Endothelial cell of umbilical vein (primary cell): ENCODE measurements at regions of chr1 and their contacts with region 1.

Region 1: DNA sequence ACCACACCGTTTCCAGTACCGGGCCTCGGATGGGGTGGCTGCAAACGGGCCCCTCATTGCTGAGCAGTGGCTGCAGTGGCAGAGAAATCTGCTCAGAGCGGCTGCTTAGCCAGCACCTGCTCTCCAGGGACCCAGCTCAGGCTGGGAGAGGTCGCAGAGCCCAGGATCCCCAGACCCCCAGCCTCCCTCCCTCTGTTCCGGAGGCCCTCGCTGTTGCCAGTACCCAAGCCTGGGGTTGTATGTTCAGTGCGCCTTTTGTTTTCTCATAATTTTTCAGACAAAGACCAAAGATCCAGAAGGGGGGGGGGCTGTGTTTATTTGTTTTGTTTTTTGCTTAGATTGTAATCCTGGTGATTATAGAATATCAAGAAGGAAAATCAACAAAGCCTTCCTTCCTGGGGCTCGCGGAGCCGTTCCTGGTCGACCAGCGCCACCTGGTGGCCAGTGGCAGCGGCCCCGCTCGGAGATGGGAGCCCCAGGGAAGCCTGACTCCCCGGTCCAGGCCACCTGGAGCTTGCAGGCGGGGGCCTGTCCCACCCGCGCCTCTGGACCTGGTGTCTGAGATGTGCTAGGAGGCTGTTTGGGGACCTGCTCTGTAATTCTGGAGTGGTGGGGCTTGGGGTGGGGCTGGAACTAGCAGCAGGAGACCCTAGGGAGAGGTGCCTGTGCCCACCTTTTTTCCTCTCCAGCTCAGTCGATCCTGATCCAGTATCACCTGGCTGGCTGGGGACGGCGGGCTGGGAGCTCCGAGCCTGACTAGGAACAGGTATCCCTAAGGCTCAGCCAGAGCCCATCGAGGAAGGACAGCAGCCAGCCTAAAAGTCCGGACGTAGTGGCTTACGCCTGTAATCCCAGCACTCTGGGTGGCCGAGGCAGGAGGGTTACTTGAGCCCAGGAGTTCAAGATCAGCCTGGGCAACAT is 123.9 kb upstream of the VAMP3 start:
- DNase-seq: peak; percentile 36
- H3K4me3 ChIP-seq: no peak overlapping the region
- H3K27ac ChIP-seq: no peak overlapping the region
- H3K4me1 ChIP-seq: peaks cover 3% of the 10 kb centered on the region
- H3K27me3 ChIP-seq: no peaks in the 10 kb centered on the region
- CTCF ChIP-seq: peak; percentile 90 to 91
- POLR2A ChIP-seq: no peak

Region 2: GRCh38 chr1:6889875-6890480 is 757.3 kb before region 1 on chr1:
- CTCF ChIA-PET with region 1: no interaction called
- POLR2A ChIA-PET with region 1: no interaction called
- dilution Hi-C with region 1: no loop called
- intact Hi-C with region 1: loop called (anchors 2 kb)
- DNase-seq: peak; percentile 82
- H3K4me3 ChIP-seq: no peak overlapping the region
- H3K27ac ChIP-seq: no peak overlapping the region
- H3K4me1 ChIP-seq: no peaks in the 10 kb centered on the region
- H3K27me3 ChIP-seq: no peaks in the 10 kb centered on the region
- CTCF ChIP-seq: peak; percentile 76 to 88
- POLR2A ChIP-seq: no peak

Region 3: GRCh38 chr1:7070389-7071029 is 576.7 kb before region 1 on chr1:
- CTCF ChIA-PET with region 1: interaction called, 26 read pairs
- POLR2A ChIA-PET with region 1: no interaction called
- dilution Hi-C with region 1: no loop called
- intact Hi-C with region 1: loop called (anchors 1 kb)
- DNase-seq: peak; percentile 69
- H3K4me3 ChIP-seq: peak overlapping the region in 2 of 3 experiments; percentile 16 to 20
- H3K27ac ChIP-seq: no peak overlapping the region
- H3K4me1 ChIP-seq: peaks cover 4% of the 10 kb centered on the region
- H3K27me3 ChIP-seq: no peaks in the 10 kb centered on the region
- CTCF ChIP-seq: peak; percentile 73 to 95
- POLR2A ChIP-seq: no peak

Region 4: DNA sequence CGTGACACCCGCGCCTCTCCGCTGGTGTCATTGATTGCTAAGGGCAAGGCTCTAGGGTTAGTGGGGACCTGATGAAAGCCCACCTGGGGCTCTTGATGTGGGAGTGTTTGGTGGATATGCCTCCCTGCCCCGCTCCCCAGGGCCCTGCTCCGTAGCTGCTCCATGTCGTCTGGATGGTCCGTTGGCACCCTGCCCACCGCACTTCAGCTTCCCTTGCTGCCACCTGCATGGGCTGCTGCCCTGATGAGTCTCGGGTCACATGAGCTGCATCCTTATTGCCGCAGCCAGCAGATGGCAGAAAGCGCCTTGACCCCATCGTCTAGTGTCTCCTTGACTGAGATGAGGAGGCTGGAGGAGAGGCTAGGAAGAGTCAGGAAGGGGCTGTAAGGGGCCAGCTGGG is 422.6 kb before region 1 on chr1:
- CTCF ChIA-PET with region 1: interaction called, 9 read pairs
- POLR2A ChIA-PET with region 1: no interaction called
- dilution Hi-C with region 1: no loop called
- intact Hi-C with region 1: loop called (anchors 1 kb)
- DNase-seq: no peak
- H3K4me3 ChIP-seq: no peak overlapping the region
- H3K27ac ChIP-seq: no peak overlapping the region
- H3K4me1 ChIP-seq: no peaks in the 10 kb centered on the region
- H3K27me3 ChIP-seq: no peaks in the 10 kb centered on the region
- CTCF ChIP-seq: no peak
- POLR2A ChIP-seq: no peak

Region 5: DNA sequence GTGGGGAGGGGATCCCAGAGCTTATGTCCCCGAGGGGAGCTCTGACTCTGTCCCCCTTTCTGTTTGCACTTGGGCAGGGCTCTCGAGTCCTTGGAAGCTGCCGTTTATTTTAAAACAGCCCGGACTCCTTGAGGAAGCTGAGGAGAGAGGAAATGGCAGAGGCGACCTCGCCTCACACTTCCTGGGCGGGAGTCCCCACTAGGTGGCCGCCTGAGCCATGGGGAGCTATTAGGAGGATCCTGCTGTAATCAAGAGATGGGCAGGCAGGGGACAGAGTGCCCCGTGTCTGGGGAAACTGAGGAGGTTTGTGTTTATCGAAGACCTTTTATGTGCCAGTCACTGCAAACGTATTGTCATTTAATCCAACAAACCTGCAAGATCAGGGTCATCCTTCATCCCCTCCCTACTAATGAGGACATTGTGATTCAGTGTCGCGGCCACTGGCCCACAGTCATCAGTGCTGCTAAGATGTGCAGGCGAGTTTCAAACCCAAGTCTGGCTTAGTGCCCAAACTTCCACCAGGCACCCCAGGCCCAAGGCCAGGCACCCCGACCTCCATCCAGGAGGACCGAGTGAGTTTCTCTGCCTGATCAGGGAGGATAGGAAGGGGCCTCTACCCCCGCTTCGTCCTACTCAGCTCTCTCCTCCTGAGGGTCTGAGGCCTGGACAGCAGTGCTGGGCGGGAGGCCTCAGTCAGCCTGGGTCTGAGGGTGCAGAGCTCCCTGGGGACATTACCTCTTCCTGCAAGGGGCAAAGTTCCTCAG is 193.0 kb before region 1 on chr1:
- CTCF ChIA-PET with region 1: interaction called, 4 read pairs
- POLR2A ChIA-PET with region 1: no interaction called
- dilution Hi-C with region 1: no loop called
- intact Hi-C with region 1: loop called (anchors 2 kb)
- DNase-seq: no peak
- H3K4me3 ChIP-seq: no peak overlapping the region
- H3K27ac ChIP-seq: no peak overlapping the region
- H3K4me1 ChIP-seq: no peaks in the 10 kb centered on the region
- H3K27me3 ChIP-seq: no peaks in the 10 kb centered on the region
- CTCF ChIP-seq: no peak
- POLR2A ChIP-seq: no peak

Region 6: GRCh38 chr1:7549277-7550161 is 97.7 kb before region 1 on chr1:
- CTCF ChIA-PET with region 1: interaction called, 6 read pairs
- POLR2A ChIA-PET with region 1: interaction called, 4 read pairs
- dilution Hi-C with region 1: no loop called
- intact Hi-C with region 1: loop called (anchors 5 kb)
- DNase-seq: peak; percentile 84
- H3K4me3 ChIP-seq: peak overlapping the region in 1 of 3 experiments; percentile 13
- H3K27ac ChIP-seq: peak overlapping the region; percentile 94
- H3K4me1 ChIP-seq: peaks cover 28% of the 10 kb centered on the region
- H3K27me3 ChIP-seq: no peaks in the 10 kb centered on the region
- CTCF ChIP-seq: no peak
- POLR2A ChIP-seq: no peak

Region 7: DNA sequence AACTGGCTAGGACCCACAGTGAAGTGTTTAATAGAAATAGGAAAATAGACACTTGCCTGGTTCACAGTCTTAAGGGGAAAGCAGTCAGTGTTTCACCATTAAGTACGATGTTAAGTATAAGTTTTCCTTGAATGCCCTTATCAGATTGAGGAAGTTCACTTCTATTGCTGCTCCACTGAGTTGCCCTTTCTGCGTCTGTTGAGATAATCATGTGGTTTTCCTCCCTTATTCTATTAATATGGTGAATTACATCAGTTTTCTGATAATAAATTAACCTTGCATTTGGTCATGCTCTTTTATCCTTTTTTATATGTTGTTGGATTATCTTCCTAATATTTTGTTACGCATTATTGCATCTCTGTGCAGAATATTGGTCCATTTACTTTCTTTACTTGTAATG is 184.2 kb after region 1 on chr1:
- CTCF ChIA-PET with region 1: no interaction called
- POLR2A ChIA-PET with region 1: no interaction called
- dilution Hi-C with region 1: no loop called
- intact Hi-C with region 1: no loop called
- DNase-seq: peak; percentile 6
- H3K4me3 ChIP-seq: no peak overlapping the region
- H3K27ac ChIP-seq: no peak overlapping the region
- H3K4me1 ChIP-seq: no peaks in the 10 kb centered on the region
- H3K27me3 ChIP-seq: no peaks in the 10 kb centered on the region
- CTCF ChIP-seq: no peak
- POLR2A ChIP-seq: no peak

Region 8: DNA sequence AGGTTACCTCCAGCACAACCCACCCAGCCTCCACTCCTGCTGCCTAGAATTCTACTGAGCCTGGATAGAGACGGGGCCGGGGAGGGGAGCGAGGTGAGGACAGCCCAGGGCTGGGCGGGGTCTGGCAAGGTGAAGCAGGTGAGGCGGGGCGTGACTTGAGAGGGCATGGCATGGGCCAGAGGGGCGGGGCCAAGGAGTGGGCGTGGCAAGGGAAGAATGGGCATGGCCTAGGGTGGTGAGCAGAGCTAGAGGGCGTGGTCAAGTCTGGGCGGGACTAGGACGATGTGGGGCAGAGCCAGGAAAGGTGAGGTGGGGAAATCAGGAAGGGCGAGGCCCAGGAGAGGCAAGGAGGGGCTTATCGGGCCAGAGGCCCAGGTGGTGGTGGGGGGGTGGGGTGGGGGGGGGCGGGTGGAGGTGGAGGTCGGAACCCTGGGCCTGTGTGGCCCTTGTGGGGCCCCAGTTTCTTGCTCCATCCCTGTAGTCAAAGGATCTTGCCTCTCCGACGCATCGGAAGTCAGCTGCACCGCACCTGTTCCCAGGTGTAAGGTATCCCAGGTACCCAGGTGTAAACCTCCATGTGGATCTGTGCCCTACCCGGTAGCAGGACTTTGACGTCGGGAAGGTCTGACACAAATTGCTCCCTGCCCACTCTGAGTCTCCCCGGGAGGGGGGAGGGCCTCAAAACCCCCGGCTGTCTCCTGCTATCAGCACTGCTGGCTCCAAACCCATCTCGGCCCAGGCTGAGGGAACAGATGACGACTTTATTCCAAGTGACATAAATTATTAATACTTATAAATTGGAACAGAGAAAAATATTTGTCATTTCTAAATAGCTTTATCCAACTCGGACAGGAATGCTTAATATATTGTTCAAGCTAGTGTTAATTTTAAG is 238.5 kb after region 1 on chr1:
- CTCF ChIA-PET with region 1: no interaction called
- POLR2A ChIA-PET with region 1: no interaction called
- dilution Hi-C with region 1: no loop called
- intact Hi-C with region 1: no loop called
- DNase-seq: no peak
- H3K4me3 ChIP-seq: no peak overlapping the region
- H3K27ac ChIP-seq: no peak overlapping the region
- H3K4me1 ChIP-seq: no peaks in the 10 kb centered on the region
- H3K27me3 ChIP-seq: no peaks in the 10 kb centered on the region
- CTCF ChIP-seq: no peak
- POLR2A ChIP-seq: no peak

Region 9: GRCh38 chr1:7912743-7913557 is 265.7 kb after region 1 on chr1:
- CTCF ChIA-PET with region 1: no interaction called
- POLR2A ChIA-PET with region 1: no interaction called
- dilution Hi-C with region 1: no loop called
- intact Hi-C with region 1: no loop called
- DNase-seq: no peak
- H3K4me3 ChIP-seq: no peak overlapping the region
- H3K27ac ChIP-seq: no peak overlapping the region
- H3K4me1 ChIP-seq: no peaks in the 10 kb centered on the region
- H3K27me3 ChIP-seq: no peaks in the 10 kb centered on the region
- CTCF ChIP-seq: no peak
- POLR2A ChIP-seq: no peak